ENCODE measurements at regions of chr16 and their contacts with region 1.

Region 1: GRCh38 chr16:19067349-19068236 is at the start of gene COQ7:
- DNase-seq: peak; percentile 99
- ATAC-seq: peak; percentile 95
- H3K4me3 Mint-ChIP-seq: peak within 1 kb of the TSS; percentile 86
- H3K27ac Mint-ChIP-seq: peak within 1 kb of the TSS; percentile 96
- H3K4me1 Mint-ChIP-seq: peaks cover 10% of the 10 kb centered on the region
- H3K27me3 Mint-ChIP-seq: peaks cover 2% of the 10 kb centered on the region
- total RNA-seq, gene COQ7: 13.2 to 16.0 TPM

Region 2: GRCh38 chr16:18789850-18790724 is 277.5 kb before region 1 on chr16 and contains the start of gene RPS15A:
- CTCF ChIA-PET with region 1: interaction called, 3 read pairs
- POLR2A ChIA-PET with region 1: interaction called, 7 read pairs
- intact Hi-C with region 1: loop called in 1 of 2 experiments (anchors 1 kb)
- DNase-seq: peak; percentile 96
- ATAC-seq: peak; percentile 96
- H3K4me3 Mint-ChIP-seq: peak within 1 kb of the TSS; percentile 99
- H3K27ac Mint-ChIP-seq: peak within 1 kb of the TSS; percentile 99
- H3K4me1 Mint-ChIP-seq: peaks cover 40% of the 10 kb centered on the region
- H3K27me3 Mint-ChIP-seq: no peaks in the 10 kb centered on the region
- total RNA-seq, gene RPS15A: 1,904 to 2,150 TPM

Region 3: DNA sequence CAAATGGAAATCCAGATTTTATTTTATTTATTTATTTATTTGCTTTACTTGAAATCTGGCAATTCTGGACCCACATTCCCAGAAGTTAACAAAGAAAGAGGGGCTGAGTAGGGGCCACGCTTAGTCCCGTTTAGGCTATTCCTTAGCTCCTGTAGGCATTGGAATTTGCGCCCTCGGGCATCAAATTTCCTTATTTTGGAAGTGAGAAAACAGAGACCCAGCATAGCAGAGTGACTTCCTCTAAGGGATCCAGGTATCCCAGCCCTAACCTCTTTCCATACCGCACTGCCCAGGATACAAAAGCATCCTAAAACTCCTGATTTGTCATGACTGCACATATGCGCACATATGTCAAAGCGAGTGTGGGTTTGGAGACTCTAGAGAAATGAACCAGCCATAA is 122.4 kb before region 1 on chr16:
- CTCF ChIA-PET with region 1: no interaction called
- POLR2A ChIA-PET with region 1: no interaction called
- intact Hi-C with region 1: loop called in 1 of 2 experiments (anchors 1 kb)
- DNase-seq: no peak
- ATAC-seq: no peak
- H3K4me3 Mint-ChIP-seq: no peak overlapping the region
- H3K27ac Mint-ChIP-seq: no peak overlapping the region
- H3K4me1 Mint-ChIP-seq: peaks cover 11% of the 10 kb centered on the region
- H3K27me3 Mint-ChIP-seq: peaks cover 1% of the 10 kb centered on the region

Region 4: DNA sequence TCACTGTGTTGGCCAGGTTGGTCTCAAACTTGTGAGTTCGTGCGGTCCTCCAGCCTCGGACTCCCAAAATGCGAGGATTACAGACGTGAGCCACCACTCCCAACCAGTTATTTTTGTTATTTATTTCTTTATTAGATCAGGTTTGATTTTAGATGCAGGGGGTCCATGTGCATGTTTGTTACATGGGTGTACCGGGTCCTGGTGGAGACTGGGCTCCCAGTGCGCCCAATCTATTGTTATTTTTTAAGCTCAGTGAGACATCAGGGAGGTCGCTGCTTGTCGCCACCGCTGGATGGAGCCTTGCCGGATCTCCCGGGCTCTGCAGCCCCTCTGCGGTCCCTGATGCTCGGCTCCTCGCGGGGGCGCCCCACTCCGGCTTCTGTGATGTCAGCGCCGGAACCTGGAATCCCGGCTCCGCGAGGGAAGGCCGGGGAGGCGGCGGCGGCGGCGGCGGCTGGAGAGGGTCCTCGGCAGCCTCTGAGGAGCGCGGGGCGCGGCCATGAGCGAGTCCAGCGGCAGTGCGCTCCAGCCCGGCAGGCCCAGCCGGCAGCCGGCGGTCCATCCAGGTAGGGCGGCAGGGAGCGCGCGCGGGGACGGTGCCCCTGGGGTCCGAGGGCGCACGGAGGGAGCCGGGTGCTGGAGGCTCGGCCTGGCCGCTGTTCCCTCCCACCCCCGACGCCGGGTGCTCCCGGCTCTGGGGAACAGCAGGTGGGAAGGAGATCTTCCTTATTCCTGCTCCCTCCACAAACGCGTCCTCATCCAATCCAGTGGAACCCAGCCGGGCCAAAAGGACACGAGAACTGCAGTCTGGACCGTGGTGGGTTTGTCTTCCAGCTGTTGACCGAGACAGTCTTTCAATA is 83.8 kb before region 1 on chr16 and contains the start of gene TMC7:
- CTCF ChIA-PET with region 1: no interaction called
- POLR2A ChIA-PET with region 1: no interaction called
- intact Hi-C with region 1: loop called (anchors 1 to 5 kb)
- DNase-seq: peak; percentile 65
- ATAC-seq: peak; percentile 58
- H3K4me3 Mint-ChIP-seq: peak within 1 kb of the TSS; percentile 18
- H3K27ac Mint-ChIP-seq: no peak within 1 kb of the TSS
- H3K4me1 Mint-ChIP-seq: no peaks in the 10 kb centered on the region
- H3K27me3 Mint-ChIP-seq: peaks cover 34% of the 10 kb centered on the region
- total RNA-seq, gene TMC7: not detected

Region 5: DNA sequence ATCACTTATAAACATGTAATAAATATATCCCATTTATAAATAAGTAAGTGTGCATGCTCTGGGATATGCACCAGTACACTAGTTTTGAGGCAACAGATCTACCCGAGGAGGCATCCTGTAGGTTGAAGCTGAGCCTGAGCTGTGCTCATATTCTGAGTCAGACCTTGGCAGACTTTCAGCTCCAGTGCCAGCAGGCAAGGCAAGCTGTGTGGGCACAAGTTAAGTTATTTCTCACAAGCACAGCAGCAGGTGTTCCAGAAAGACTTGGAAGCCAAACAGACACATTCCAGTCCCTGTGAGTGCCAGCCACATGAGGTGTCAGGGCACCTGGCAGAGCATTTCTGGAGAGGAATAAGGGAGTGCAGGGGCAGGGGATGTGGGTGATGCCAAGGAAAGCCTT is 216.6 kb after region 1 on chr16:
- CTCF ChIA-PET with region 1: no interaction called
- POLR2A ChIA-PET with region 1: no interaction called
- intact Hi-C with region 1: no loop called
- DNase-seq: peak; percentile 55
- ATAC-seq: peak; percentile 80
- H3K4me3 Mint-ChIP-seq: no peak overlapping the region
- H3K27ac Mint-ChIP-seq: no peak overlapping the region
- H3K4me1 Mint-ChIP-seq: peaks cover 9% of the 10 kb centered on the region
- H3K27me3 Mint-ChIP-seq: peaks cover 7% of the 10 kb centered on the region

Region 6: DNA sequence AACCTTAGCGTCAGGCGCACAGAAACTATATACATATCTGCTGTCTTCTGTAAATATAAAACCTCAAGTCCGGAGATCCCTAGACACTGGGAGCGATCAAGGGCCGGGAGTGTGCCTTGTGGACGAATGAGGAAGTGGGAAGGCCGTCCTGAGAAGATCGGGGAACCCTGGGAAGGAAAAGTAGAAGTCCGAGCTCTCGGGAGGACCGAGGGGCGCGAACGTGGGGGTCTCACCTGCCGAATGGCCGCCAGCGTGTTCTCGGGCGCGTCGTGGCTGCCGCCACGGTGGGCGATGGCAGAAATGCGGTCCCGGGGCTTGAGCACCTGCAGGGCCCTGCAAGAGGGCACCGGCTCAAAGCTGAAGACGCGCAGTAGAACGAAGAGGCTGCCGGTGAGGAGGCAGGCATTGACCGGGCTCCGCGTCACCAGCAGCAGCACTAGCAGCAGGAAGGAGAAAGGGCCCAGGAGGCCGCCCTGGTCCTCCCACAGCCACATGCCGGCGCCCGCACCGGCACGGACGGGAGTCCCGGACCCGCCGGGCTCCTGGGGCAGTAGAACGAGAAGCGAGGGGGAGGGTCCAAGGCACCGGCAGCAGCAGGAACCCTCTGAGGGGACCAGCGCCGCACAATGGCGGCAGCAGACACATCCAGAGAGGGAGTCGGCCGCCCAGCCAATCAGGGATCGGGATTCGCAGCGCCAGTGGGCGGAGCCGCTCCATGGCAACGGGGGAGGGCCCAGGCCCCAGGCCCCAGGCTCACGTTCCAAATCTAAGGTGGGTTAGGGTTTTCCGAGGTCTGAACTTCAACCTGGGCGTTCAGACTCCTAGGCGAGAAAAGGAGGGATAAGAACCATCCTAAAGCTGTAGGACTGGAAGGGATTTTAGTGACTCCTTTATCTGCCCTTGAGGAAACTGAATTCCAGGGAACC is 454.1 kb after region 1 on chr16 and contains the start of gene GDE1:
- CTCF ChIA-PET with region 1: no interaction called
- POLR2A ChIA-PET with region 1: no interaction called
- intact Hi-C with region 1: loop called (anchors 1 kb)
- DNase-seq: peak; percentile 97
- ATAC-seq: peak; percentile 83
- H3K4me3 Mint-ChIP-seq: peak within 1 kb of the TSS; percentile 94
- H3K27ac Mint-ChIP-seq: peak within 1 kb of the TSS; percentile 90
- H3K4me1 Mint-ChIP-seq: peaks cover 45% of the 10 kb centered on the region
- H3K27me3 Mint-ChIP-seq: no peaks in the 10 kb centered on the region
- total RNA-seq, gene GDE1: 13.8 to 18.1 TPM

Region 7: GRCh38 chr16:19555162-19555937 is 487.8 kb after region 1 on chr16 and contains the start of gene VPS35L:
- CTCF ChIA-PET with region 1: interaction called, 3 read pairs
- POLR2A ChIA-PET with region 1: interaction called, 5 read pairs
- intact Hi-C with region 1: loop called in 1 of 2 experiments (anchors 1 kb)
- DNase-seq: peak; percentile 96
- ATAC-seq: peak; percentile 97
- H3K4me3 Mint-ChIP-seq: peak within 1 kb of the TSS; percentile 86
- H3K27ac Mint-ChIP-seq: peak within 1 kb of the TSS; percentile 87
- H3K4me1 Mint-ChIP-seq: peaks cover 20% of the 10 kb centered on the region
- H3K27me3 Mint-ChIP-seq: no peaks in the 10 kb centered on the region
- total RNA-seq, gene VPS35L: 30.7 to 31.6 TPM